Cardiac septum (tissue), 1 donor: ENCODE measurements at regions of chr1 and their contacts with region 1.

Region 1: DNA sequence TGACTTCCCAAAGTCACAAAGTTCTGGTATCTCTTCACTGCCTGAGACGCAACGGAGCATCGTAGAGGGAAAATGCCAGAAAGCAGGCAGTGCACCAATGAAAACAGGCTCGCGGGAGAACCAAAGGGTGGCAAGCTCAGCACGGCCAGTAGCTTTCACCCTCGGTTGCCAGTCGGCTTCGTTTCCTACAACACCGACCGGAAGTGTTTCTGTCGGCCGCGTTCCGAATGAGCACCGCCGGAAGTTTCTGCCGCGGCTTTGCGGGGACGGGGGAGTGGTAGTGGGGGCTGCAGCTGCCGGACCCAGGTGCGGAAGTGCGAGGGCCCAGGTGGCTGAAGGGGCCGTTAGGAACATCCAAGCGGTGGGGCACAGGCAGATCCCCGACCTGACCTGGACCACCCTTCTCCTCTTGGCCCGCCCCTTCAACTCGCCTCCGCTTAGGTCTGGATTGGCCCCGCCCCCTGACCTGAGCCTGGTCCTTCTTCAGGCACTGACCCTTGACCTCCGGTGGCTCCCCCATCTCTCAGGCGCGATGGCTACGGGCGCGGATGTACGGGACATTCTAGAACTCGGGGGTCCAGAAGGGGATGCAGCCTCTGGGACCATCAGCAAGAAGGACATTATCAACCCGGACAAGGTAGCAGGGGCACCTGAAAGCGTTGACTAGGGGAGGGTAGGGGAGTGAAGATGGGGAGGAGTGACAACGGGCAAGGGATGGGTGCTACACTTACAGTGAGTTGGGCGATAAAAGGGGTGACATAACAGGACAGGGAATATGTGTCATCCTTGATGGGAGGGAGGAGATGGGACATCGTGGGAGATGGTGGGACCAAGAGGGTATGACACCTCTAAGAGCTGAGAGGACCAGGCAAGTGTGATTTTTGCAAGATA is at the start of gene DMAP1:
- DNase-seq: peak; percentile 93
- total RNA-seq, gene DMAP1: 27.7 TPM

Region 2: DNA sequence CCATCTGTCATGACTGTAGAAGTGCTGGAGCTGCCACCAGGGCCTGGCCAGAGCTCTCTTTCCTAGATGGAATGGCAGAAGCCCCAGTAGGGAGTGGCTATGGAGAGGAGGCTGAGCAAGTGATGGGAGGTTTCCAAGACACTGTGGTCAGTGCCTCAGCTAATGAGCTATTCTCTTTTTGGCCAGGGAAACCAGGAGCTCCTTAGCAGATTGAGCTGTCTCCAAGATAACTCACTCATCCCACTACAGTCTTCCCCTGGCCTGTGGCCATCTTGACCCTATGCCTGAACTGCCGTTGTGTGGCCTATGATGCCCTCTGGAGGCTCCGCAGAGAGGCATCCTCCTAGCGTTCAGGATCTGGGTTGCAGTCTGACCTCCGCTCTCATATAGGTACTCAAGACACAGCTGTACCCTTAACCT is 81.1 kb after region 1 on chr1:
- intact Hi-C with region 1: loop called (anchors 2 kb)
- DNase-seq: no peak

Region 3: DNA sequence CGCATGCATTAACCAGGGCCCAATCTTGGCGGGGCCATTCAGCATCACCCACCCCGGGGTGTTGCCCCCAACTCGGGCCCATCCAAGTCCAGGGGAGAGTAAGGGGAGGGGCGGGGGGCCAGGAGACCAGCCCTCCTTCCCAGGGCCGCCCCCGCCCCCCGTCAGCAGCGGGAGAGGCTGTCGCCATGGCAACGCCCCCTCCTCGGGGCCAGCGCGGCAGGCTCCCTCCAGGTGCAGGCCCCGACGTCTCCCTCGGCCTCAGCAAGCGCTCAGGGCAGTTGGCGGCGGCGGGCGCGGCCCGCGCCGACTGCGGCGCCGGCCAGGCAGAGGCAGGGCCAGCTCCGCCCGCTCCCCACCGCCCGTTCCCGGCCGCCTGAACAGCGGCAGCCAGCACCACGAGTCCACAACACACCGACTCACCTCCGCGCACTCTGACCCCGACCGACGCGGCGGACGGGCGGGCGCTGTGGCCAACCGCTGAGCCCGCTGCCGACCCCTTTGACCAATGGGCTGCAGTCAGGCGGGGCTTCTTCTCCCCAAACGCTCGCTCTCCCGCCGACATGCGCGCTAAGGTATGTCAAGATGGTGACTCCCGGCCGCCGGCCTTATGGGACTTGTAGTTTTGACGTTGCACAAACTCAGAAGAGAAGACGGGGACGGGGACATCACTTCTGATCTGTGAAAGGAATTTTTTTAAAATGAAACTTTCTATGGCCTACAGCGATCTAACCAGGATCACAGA is 141.5 kb after region 1 on chr1 and contains the start of gene ERI3:
- intact Hi-C with region 1: loop called (anchors 10 kb)
- DNase-seq: peak; percentile 99
- total RNA-seq, gene ERI3: 45.0 TPM

Region 4: GRCh38 chr1:44500181-44501046 is 286.9 kb after region 1 on chr1:
- intact Hi-C with region 1: loop called (anchors 5 kb)
- DNase-seq: no peak

Region 5: DNA sequence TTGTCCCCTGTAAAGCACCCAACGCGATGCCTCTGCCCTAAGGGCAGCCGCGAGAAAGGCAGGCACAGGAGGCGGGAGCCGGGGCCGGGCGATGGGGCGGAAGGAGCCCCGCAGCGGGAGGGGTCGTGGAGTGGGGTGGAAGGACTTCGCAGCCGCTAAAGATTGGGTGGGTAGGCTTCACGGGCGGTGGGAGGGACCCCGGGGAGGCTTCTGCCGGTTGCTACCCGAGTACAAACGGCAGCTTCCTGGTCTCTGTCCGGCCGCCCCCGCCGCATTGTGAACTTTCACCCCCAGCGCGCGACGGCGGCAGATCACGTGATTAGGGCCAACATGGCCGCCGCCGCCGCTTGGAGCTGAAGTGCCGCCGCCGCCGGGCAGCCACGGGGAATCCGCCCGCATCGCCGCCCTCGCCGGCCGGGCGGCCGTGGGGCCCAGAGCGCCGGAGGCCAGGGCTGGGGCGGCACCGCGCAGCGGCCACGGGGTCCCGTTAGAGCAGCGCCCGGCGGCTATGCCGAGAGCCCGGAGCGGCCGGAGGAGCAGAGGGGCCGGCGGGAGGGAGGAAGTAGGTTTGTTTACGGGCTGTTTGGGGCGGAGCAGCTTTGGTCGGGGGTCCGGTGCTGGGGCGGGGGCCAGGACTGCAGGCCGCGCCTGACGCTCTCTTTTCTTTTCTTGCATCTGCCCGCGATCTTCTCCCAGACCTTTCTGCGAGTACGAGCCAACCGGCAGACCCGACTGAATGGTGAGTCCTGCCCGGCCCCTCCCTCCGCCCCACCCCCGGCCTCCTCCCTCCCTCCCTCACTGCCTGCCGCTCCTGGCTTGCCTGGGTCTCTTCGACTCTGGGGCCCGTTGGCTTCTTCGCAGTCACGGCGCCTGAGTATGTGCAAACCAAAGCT is 418.4 kb after region 1 on chr1:
- intact Hi-C with region 1: loop called (anchors 5 kb)
- DNase-seq: peak; percentile 95